Left ventricle myocardium inferior (tissue), 1 donor: ENCODE measurements at regions of chr1 and their contacts with region 1.

Region 1: GRCh38 chr1:45686317-45687013 is at the start of gene GPBP1L1:
- DNase-seq: peak; percentile 98
- H3K4me3 ChIP-seq: peak within 1 kb of the TSS; percentile 95
- H3K27ac ChIP-seq: peak within 1 kb of the TSS; percentile 98
- H3K4me1 ChIP-seq: peaks cover 72% of the 10 kb centered on the region
- H3K27me3 ChIP-seq: no peaks in the 10 kb centered on the region
- CTCF ChIP-seq: no peak
- total RNA-seq, gene GPBP1L1: 80.7 TPM

Region 2: GRCh38 chr1:45583264-45583665 is 103.2 kb before region 1 on chr1:
- intact Hi-C with region 1: loop called (anchors 10 kb)
- DNase-seq: peak; percentile 94
- H3K4me3 ChIP-seq: peak overlapping the region; percentile 92
- H3K27ac ChIP-seq: peak overlapping the region; percentile 97
- H3K4me1 ChIP-seq: peaks cover 37% of the 10 kb centered on the region
- H3K27me3 ChIP-seq: no peaks in the 10 kb centered on the region
- CTCF ChIP-seq: no peak

Region 3: DNA sequence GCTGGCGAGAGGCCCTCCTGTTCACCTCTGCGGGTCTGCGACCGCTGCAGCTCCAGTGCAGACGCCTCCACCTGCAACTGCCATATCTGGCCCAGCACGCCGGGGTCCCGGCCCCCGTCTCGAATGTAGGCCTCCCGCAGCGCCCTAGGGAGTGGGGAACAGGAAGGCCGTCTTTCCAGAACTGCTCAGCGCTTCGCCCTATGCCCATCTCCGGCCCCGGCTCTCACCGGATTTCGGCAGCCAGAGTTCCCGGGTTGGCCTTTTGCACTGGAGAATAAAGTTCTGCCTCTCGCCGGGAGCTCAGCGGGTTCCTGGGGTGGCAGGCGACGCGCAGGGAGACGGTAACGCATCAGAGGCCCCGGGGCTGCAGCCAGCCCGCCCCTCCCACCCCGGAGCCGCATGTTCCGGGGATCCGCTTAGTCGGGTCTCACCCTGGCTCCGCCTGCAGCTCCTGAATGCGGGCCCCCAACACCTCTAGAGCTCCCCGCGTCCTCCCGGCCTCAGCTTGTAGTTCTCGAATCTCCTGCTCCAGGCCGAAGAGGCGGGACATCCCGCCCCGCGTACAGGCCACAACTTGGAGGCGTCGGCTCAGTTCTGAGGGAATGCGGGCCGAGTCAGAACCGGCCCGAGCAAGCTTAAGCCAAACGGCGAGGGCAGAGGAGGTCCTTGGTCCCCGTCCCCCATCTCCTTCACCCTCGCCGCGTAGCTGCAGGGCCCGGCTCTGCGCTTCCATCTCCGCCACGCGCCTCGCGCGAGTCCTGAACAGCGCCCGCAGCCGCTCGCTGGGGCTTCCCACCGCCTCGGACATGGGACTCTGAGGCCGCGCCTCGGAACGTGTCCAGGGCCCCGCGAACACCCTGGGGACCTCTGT is 63.7 kb before region 1 on chr1:
- intact Hi-C with region 1: no loop called
- DNase-seq: peak; percentile 29
- H3K4me3 ChIP-seq: peak overlapping the region; percentile 49
- H3K27ac ChIP-seq: peak overlapping the region; percentile 60
- H3K4me1 ChIP-seq: peaks cover 48% of the 10 kb centered on the region
- H3K27me3 ChIP-seq: no peaks in the 10 kb centered on the region
- CTCF ChIP-seq: no peak